ENCODE measurements at regions of chr3 and their contacts with region 1.

Region 1: GRCh38 chr3:52536369-52537164 is at the start of gene UQCC5:
- DNase-seq: peak; percentile 92
- ATAC-seq: peak; percentile 87
- H3K4me3 Mint-ChIP-seq: peak within 1 kb of the TSS; percentile 98
- H3K27ac Mint-ChIP-seq: peak within 1 kb of the TSS; percentile 96
- H3K4me1 Mint-ChIP-seq: peaks cover 42% of the 10 kb centered on the region
- H3K27me3 Mint-ChIP-seq: no peaks in the 10 kb centered on the region
- CTCF ChIP-seq: no peak
- total RNA-seq, gene UQCC5: 11.7 and 13.6 TPM in 2 replicates

Region 2: DNA sequence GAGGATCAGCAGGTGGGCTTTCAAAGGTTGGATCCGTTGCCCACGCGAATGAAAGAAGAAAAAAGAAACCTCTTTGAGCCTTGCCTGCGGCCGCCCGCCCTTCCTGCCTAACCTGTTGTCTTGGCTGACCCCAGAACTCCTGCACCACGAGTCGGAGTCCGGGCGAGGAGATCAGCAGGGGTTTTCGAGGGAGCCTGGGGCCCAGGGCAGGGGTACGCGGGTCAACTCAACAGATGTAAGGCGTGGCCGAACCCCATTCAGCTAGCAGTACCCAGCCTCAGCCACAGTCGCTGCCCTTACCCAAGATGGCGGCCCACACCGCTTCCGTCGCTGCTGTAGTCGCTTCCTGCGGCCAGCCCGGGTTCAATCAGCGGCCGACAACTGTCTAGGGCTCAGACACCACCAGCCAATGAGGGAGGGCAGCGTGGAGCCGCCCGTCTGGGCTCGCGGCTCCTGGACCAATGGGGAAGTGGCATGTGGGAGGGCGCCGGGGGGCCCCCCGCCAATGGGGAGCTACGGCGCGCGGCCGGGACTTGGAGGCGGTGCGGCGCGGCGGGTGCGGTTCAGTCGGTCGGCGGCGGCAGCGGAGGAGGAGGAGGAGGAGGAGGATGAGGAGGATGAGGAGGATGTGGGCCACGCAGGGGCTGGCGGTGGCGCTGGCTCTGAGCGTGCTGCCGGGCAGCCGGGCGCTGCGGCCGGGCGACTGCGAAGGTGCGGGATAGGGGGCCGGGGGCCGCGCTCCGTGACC is 1151.7 kb before region 1 on chr3 and contains the start of gene MANF:
- CTCF ChIA-PET with region 1: no interaction called
- POLR2A ChIA-PET with region 1: interaction called, 3 read pairs
- intact Hi-C with region 1: loop called (anchors 5 kb)
- DNase-seq: peak; percentile 89
- ATAC-seq: peak; percentile 95
- H3K4me3 Mint-ChIP-seq: peak within 1 kb of the TSS; percentile 99
- H3K27ac Mint-ChIP-seq: peak within 1 kb of the TSS; percentile 98
- H3K4me1 Mint-ChIP-seq: peaks cover 49% of the 10 kb centered on the region
- H3K27me3 Mint-ChIP-seq: no peaks in the 10 kb centered on the region
- CTCF ChIP-seq: no peak
- total RNA-seq, gene MANF: 64.2 and 66.1 TPM in 2 replicates

Region 3: DNA sequence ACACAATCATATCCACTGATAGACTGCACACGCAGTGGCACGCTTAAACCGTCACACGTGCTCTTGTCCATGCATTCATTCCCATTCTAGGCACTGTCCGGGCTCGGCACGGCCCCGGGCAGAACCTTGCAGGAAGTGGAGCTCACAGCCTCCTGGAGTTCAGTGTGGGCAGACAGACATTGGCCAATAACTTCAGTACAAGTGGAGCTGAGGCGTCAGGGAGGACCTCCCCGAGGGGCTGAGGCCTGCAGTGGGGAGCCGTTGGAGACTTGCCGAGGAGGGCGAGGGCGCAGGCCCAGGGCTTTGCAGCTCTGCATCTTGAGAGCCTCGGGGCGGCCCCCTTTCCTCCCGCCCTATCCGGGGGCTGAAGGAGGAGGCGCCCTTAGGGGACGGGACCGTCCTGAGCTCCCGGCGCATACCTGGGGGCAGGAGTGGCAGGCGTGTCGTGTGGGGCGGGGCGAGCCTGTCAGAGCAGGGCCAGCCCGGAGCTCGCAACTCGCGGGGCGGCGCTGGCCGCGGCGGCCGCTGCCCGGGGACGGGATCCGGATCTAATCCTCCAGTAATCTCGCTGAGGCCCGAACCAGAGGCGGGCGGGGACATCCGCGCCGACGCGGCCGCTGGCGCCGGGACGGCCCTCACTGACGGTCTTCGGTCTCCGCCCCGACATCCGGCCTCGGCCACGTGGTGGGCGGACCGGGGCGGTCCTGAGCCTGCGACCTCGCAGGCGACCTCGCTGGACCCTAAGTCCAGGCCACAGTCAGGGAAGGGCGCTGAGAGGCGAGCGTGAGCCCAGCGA is 553.6 kb before region 1 on chr3 and contains the start of gene ACY1:
- CTCF ChIA-PET with region 1: no interaction called
- POLR2A ChIA-PET with region 1: no interaction called
- intact Hi-C with region 1: loop called (anchors 10 kb)
- DNase-seq: peak; percentile 70
- ATAC-seq: peak; percentile 79
- H3K4me3 Mint-ChIP-seq: peak within 1 kb of the TSS; percentile 86
- H3K27ac Mint-ChIP-seq: peak within 1 kb of the TSS; percentile 91
- H3K4me1 Mint-ChIP-seq: peaks cover 23% of the 10 kb centered on the region
- H3K27me3 Mint-ChIP-seq: no peaks in the 10 kb centered on the region
- CTCF ChIP-seq: no peak
- total RNA-seq, gene ACY1: 24.9 and 26.7 TPM in 2 replicates

Region 4: GRCh38 chr3:52455283-52456168 is 81.0 kb before region 1 on chr3 and contains the start of gene NISCH:
- CTCF ChIA-PET with region 1: no interaction called
- POLR2A ChIA-PET with region 1: no interaction called
- intact Hi-C with region 1: loop called (anchors 1 kb)
- DNase-seq: peak; percentile 98
- ATAC-seq: peak; percentile 96
- H3K4me3 Mint-ChIP-seq: peak within 1 kb of the TSS; percentile 91
- H3K27ac Mint-ChIP-seq: peak within 1 kb of the TSS; percentile 91
- H3K4me1 Mint-ChIP-seq: peaks cover 40% of the 10 kb centered on the region
- H3K27me3 Mint-ChIP-seq: no peaks in the 10 kb centered on the region
- CTCF ChIP-seq: no peak
- total RNA-seq, gene NISCH: 79.6 and 89.5 TPM in 2 replicates

Region 5: DNA sequence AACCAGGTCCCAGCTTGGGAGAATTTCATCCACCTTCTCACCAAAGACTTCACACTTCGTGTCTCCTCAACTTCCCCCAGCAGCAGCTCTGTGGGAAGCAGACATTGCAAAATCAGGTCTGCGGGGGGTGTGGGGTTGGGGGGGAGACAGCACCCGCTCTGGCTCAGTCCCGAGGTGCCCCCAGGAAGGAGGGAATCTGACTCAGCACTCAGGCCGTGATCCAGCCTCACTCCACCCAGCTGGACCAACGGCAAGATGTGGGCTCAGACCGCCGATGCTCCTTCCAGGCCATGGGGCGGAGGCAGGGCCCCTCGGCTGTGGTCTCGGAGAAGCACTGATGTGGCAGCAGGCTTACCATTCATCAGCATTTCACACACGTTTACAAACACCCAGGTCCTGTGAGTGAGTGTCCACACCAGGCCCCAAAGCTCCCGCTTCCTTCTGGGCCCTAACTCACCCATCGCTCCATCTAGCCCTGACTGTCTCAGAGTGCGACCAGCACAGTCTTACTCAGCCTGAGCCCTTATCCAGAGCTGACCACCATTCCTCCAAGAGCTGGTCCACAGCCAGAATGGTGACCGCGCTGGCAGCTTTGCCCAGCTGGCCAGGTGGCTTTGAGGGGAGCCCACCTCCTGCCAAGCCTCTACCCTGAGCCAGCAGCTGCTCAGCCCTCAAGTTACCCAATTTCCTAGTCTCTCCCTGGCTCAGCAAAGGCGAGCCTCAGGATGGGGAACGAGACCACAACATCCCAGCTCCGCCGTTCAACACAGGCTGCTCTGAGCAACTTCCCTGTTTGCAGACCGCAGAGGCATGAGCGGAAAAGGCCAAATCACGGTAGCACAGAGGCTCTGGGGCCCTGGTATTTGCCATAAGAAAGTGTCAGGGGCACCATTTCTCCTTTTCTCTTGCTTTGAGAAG is 38.2 kb before region 1 on chr3:
- CTCF ChIA-PET with region 1: no interaction called
- POLR2A ChIA-PET with region 1: no interaction called
- intact Hi-C with region 1: loop called (anchors 1 kb)
- DNase-seq: no peak
- ATAC-seq: peak; percentile 81
- H3K4me3 Mint-ChIP-seq: no peak overlapping the region
- H3K27ac Mint-ChIP-seq: no peak overlapping the region
- H3K4me1 Mint-ChIP-seq: peaks cover 20% of the 10 kb centered on the region
- H3K27me3 Mint-ChIP-seq: no peaks in the 10 kb centered on the region
- CTCF ChIP-seq: no peak

Region 6: GRCh38 chr3:52596658-52597265 is 60.2 kb after region 1 on chr3:
- CTCF ChIA-PET with region 1: no interaction called
- POLR2A ChIA-PET with region 1: no interaction called
- intact Hi-C with region 1: no loop called
- DNase-seq: no peak
- ATAC-seq: no peak
- H3K4me3 Mint-ChIP-seq: no peak overlapping the region
- H3K27ac Mint-ChIP-seq: no peak overlapping the region
- H3K4me1 Mint-ChIP-seq: no peaks in the 10 kb centered on the region
- H3K27me3 Mint-ChIP-seq: no peaks in the 10 kb centered on the region
- CTCF ChIP-seq: no peak

Region 7: GRCh38 chr3:52770496-52771333 is 234.1 kb after region 1 on chr3 and contains the start of gene NEK4:
- CTCF ChIA-PET with region 1: no interaction called
- POLR2A ChIA-PET with region 1: no interaction called
- intact Hi-C with region 1: loop called (anchors 10 kb)
- DNase-seq: peak; percentile 80
- ATAC-seq: peak; percentile 95
- H3K4me3 Mint-ChIP-seq: peak within 1 kb of the TSS; percentile 94
- H3K27ac Mint-ChIP-seq: peak within 1 kb of the TSS; percentile 95
- H3K4me1 Mint-ChIP-seq: peaks cover 17% of the 10 kb centered on the region
- H3K27me3 Mint-ChIP-seq: no peaks in the 10 kb centered on the region
- CTCF ChIP-seq: no peak
- total RNA-seq, gene NEK4: 23.0 and 24.5 TPM in 2 replicates

Measured in activated B cell treated with CpG ODN at 0.5 μM for 24 hours (primary cell).